ENCODE measurements at regions of chr16 and their contacts with region 1.

Region 1: GRCh38 chr16:60463986-60464385 is 1572.3 kb downstream of the CDH8 start:
- DNase-seq: no peak
- ATAC-seq: no peak
- H3K4me3 ChIP-seq: no peak overlapping the region
- H3K27ac ChIP-seq: no peak overlapping the region
- H3K4me1 ChIP-seq: no peaks in the 10 kb centered on the region
- H3K27me3 ChIP-seq: no peaks in the 10 kb centered on the region
- CTCF ChIP-seq: no peak

Region 2: DNA sequence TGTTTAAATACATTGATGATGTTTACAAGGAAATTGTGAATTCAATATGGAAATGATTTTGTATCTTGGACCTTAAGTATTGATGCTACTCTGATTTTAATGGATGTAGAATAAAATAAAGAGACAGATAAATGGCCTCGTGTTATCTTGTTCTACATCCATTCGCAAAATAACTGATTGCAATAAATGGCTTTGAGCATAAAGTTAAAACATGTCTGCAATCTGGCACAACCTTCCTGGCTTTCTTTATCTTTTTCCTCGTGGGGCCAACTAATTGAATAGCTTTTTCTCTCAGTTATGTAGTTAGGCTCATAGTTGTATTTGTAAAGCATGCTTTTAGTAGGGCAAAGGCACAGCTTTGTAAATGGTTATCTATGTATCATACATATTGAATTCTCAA is 880.8 kb after region 1 on chr16:
- intact Hi-C with region 1: loop called in 1 of 10 experiments (anchors 10 kb)
- DNase-seq: no peak
- ATAC-seq: no peak
- H3K4me3 ChIP-seq: no peak overlapping the region
- H3K27ac ChIP-seq: no peak overlapping the region
- H3K4me1 ChIP-seq: no peaks in the 10 kb centered on the region
- H3K27me3 ChIP-seq: no peaks in the 10 kb centered on the region
- CTCF ChIP-seq: no peak

Measured in heart right ventricle (tissue), 16 donors.